ACHN (cell line): ENCODE measurements at regions of chr11 and their contacts with region 1.

Region 1: GRCh38 chr11:57800444-57801182 is 39.0 kb downstream of the CTNND1 start:
- DNase-seq: peak; percentile 63

Region 2: DNA sequence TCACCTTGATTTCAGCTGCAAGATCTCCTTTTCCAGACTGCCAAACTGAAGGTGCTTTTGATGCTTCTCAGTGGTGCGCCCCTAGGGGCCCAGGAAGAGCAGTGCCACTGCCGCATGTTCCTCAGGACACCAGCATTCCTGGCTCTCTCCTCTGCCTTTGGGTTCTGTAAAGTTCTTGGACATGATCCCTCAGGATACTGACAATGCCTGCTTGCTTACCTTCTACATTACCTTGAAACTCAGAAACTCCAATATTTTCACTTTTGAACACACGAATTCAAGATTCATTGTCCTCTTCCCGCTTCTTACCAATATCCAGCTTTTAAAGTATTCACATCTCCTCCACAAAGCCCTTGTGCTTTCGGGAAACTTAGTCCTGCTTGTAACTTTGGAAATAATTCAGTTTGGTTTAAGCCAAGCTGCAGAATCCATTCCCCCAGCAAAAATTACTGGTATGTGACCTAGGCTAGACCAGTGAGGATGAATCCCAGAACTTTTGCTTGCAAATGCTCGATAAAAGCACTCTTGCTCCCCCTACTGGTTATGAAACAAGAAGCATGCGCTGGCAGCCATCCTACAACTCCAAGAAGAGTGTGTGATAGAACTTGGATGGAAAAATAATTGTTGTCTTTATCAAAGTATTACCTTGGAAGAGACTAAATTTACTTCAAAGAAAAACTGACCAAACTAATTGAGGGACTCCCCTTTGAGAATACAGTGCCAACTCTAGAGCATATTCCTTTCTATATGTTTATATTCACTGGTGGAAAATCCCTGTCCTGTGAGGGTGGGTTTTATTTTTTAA is 723.8 kb after region 1 on chr11:
- in situ Hi-C with region 1: loop called (anchors 25 kb)
- DNase-seq: peak; percentile 74